Naive thymus-derived CD4-positive, alpha-beta T cell (primary cell): ENCODE measurements at regions of chr1 and their contacts with region 1.

Region 1: GRCh38 chr1:42913426-42914091 is 45.1 kb downstream of the SLC2A1 start:
- DNase-seq: peak in 7 of 9 donors; percentile 54 to 84 (median 76)
- ATAC-seq: peak; percentile 94
- H3K4me3 ChIP-seq: no peak overlapping the region
- H3K4me3 Mint-ChIP-seq: no peak overlapping the region
- H3K27ac ChIP-seq: no peak overlapping the region
- H3K27ac Mint-ChIP-seq: no peak overlapping the region
- H3K4me1 ChIP-seq: no peaks in the 10 kb centered on the region
- H3K4me1 Mint-ChIP-seq: peaks cover 0 to 5% (median 4%) of the 10 kb centered on the region in 7 donors
- H3K27me3 ChIP-seq: no peaks in the 10 kb centered on the region
- H3K27me3 Mint-ChIP-seq: peaks cover 0 to 8% (median 0%) of the 10 kb centered on the region in 5 donors

Region 2: GRCh38 chr1:42777852-42778251 is 135.7 kb before region 1 on chr1:
- CTCF ChIA-PET with region 1: interaction called, 14 read pairs
- POLR2A ChIA-PET with region 1: no interaction called
- intact Hi-C with region 1: loop called in 1 of 2 experiments (anchors 1 kb)
- DNase-seq: peak in 4 of 9 donors; percentile 16 to 36 (median 22)
- ATAC-seq: peak; percentile 63
- H3K4me3 ChIP-seq: no peak overlapping the region
- H3K4me3 Mint-ChIP-seq: no peak overlapping the region
- H3K27ac ChIP-seq: no peak overlapping the region
- H3K27ac Mint-ChIP-seq: no peak overlapping the region
- H3K4me1 ChIP-seq: no peaks in the 10 kb centered on the region
- H3K4me1 Mint-ChIP-seq: peaks cover 7 to 26% (median 15%) of the 10 kb centered on the region in 7 donors
- H3K27me3 ChIP-seq: no peaks in the 10 kb centered on the region
- H3K27me3 Mint-ChIP-seq: no peaks in the 10 kb centered on the region

Region 3: DNA sequence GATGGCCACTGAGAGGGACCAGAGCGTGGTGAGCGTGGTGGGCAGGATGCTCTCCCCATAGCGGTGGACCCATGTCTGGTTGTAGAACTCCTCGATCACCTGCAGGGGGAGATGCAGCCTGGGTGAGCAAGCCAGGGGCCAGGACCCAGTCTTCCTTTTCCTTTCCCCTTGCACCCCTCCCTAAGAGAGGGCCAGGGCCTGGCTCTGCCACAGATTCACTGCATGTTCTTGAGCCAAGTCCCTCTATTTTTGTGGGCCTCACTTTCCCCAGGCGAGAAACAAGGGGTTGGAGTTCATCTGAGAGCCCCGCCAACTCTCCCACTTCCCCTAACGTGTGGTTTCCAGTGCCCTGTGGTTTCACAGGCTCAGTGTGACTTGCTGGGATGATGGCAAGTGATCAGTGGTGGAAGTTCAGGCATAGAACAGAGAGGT is 17.6 kb after region 1 on chr1:
- CTCF ChIA-PET with region 1: interaction called, 3 read pairs
- POLR2A ChIA-PET with region 1: no interaction called
- intact Hi-C with region 1: loop called in 1 of 2 experiments (anchors 1 kb)
- DNase-seq: peak; percentile 36 to 70 (median 58)
- ATAC-seq: peak; percentile 60
- H3K4me3 ChIP-seq: peak overlapping the region; percentile 41
- H3K4me3 Mint-ChIP-seq: peak overlapping the region; percentile 66 to 89 (median 80)
- H3K27ac ChIP-seq: peak overlapping the region; percentile 81
- H3K27ac Mint-ChIP-seq: peak overlapping the region; percentile 87 to 98 (median 93)
- H3K4me1 ChIP-seq: peaks cover 60 to 65% of the 10 kb centered on the region in 2 donors
- H3K4me1 Mint-ChIP-seq: peaks cover 43 to 81% (median 72%) of the 10 kb centered on the region in 7 donors
- H3K27me3 ChIP-seq: no peaks in the 10 kb centered on the region
- H3K27me3 Mint-ChIP-seq: no peaks in the 10 kb centered on the region